ENCODE measurements at regions of chr17 and their contacts with region 1.

Region 1: GRCh38 chr17:804541-805435 is 22.6 kb downstream of the MRM3 start:
- DNase-seq: no peak
- H3K4me3 ChIP-seq: no peak overlapping the region
- H3K27ac ChIP-seq: no peak overlapping the region
- H3K4me1 ChIP-seq: no peaks in the 10 kb centered on the region
- H3K27me3 ChIP-seq: no peaks in the 10 kb centered on the region
- CTCF ChIP-seq: no peak

Region 2: GRCh38 chr17:614653-615473 is 189.9 kb before region 1 on chr17:
- CTCF ChIA-PET with region 1: no interaction called
- POLR2A ChIA-PET with region 1: no interaction called
- intact Hi-C with region 1: no loop called
- DNase-seq: peak in 1 of 2 experiments; percentile 18
- H3K4me3 ChIP-seq: no peak overlapping the region
- H3K27ac ChIP-seq: no peak overlapping the region
- H3K4me1 ChIP-seq: no peaks in the 10 kb centered on the region
- H3K27me3 ChIP-seq: no peaks in the 10 kb centered on the region
- CTCF ChIP-seq: no peak

Region 3: DNA sequence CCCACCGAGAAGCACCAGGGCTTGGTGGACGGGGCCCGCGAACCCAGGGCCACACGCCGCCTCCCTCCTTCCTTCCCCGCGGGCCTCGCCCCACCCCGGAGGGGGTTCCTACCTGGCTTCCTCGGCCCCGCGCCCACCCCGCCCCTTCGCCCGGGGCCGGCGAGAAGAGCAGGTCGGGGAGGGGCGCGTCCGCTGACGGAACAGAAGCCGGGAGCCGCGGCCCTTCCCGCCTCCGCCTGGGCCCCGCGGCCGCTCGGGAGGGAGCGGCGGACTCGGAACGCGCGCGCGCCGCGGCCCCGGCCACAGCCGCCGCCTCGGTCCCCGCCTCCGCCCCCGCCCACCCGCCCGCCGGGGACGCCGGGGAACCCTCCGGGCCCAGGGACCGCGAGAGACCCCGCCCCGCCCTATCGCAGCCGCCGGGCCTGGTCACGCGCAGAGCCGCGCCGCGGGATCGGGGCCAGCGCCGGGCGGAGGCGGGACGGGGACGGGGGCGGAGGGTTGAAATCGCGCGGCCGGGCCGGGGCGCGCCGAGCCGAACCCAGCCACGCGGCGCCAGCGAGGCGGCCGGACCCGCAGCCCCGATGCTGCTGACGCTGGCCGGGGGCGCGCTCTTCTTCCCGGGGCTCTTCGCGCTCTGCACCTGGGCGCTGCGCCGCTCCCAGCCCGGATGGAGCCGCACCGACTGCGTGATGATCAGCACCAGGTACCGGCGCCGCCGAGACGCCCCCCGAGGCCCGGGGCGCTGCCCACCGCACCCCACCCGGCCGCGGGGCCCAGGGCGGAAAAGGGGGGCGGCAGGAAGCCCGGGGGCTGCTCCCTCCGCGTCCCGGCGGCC is 72.5 kb before region 1 on chr17 and contains the start of gene TLCD3A:
- CTCF ChIA-PET with region 1: no interaction called
- POLR2A ChIA-PET with region 1: no interaction called
- intact Hi-C with region 1: no loop called
- DNase-seq: peak; percentile 42 to 87
- H3K4me3 ChIP-seq: peak within 1 kb of the TSS; percentile 96
- H3K27ac ChIP-seq: no peak within 1 kb of the TSS
- H3K4me1 ChIP-seq: peaks cover 12% of the 10 kb centered on the region
- H3K27me3 ChIP-seq: no peaks in the 10 kb centered on the region
- CTCF ChIP-seq: no peak
- total RNA-seq, gene TLCD3A: 13.4 and 29.4 TPM in 2 replicates

Region 4: DNA sequence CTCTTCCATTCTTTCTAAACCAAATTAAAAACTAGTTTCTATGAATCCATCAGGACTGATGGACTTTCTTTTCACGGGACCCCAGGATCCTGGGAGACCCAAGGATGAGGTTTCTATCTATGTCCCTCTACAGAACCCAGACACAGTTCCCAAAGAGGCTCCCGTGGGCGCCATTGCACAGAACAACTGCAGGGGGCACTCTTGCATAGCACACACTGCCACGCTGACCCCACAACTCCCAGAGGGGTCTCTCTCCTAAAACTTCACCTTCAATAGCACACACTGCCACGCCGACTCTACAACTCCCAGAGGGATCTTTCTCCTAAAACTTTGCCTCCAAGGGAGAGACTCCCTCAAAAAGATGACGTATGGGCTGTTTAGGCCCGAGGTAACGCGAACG is 366.0 kb after region 1 on chr17:
- CTCF ChIA-PET with region 1: no interaction called
- POLR2A ChIA-PET with region 1: no interaction called
- intact Hi-C with region 1: no loop called
- DNase-seq: peak in 1 of 2 experiments; percentile 18
- H3K4me3 ChIP-seq: no peak overlapping the region
- H3K27ac ChIP-seq: no peak overlapping the region
- H3K4me1 ChIP-seq: no peaks in the 10 kb centered on the region
- H3K27me3 ChIP-seq: no peaks in the 10 kb centered on the region
- CTCF ChIP-seq: peak; percentile 37; the same call in 1 of the 2 replicates

Region 5: GRCh38 chr17:2023692-2024571 is 1219.1 kb after region 1 on chr17:
- CTCF ChIA-PET with region 1: no interaction called
- POLR2A ChIA-PET with region 1: interaction called, 10 read pairs
- intact Hi-C with region 1: no loop called
- DNase-seq: peak; percentile 34 to 35
- H3K4me3 ChIP-seq: peak overlapping the region; percentile 68; the same call in 1 of the 2 replicates
- H3K27ac ChIP-seq: no peak overlapping the region
- H3K4me1 ChIP-seq: peaks cover 7% of the 10 kb centered on the region; the same call in 1 of the 2 replicates
- H3K27me3 ChIP-seq: peaks cover 39% of the 10 kb centered on the region
- CTCF ChIP-seq: no peak

Measured in PC-9 (cell line).